Activated T-helper 1 cell treated with anti-CD3 and anti-CD28 coated beads, Interleukin-12 subunit alpha, Interleukin-12 subunit beta, Interleukin-2, Interleukin-4 antibody, amounts not matched to agents 30 ng/mL and 10 ng/mL and 1 ng/mL, durations not matched to agents 14 hours and 24 hours and 36 hours (primary cell): ENCODE measurements at regions of chr19 and their contacts with region 1.

Region 1: DNA sequence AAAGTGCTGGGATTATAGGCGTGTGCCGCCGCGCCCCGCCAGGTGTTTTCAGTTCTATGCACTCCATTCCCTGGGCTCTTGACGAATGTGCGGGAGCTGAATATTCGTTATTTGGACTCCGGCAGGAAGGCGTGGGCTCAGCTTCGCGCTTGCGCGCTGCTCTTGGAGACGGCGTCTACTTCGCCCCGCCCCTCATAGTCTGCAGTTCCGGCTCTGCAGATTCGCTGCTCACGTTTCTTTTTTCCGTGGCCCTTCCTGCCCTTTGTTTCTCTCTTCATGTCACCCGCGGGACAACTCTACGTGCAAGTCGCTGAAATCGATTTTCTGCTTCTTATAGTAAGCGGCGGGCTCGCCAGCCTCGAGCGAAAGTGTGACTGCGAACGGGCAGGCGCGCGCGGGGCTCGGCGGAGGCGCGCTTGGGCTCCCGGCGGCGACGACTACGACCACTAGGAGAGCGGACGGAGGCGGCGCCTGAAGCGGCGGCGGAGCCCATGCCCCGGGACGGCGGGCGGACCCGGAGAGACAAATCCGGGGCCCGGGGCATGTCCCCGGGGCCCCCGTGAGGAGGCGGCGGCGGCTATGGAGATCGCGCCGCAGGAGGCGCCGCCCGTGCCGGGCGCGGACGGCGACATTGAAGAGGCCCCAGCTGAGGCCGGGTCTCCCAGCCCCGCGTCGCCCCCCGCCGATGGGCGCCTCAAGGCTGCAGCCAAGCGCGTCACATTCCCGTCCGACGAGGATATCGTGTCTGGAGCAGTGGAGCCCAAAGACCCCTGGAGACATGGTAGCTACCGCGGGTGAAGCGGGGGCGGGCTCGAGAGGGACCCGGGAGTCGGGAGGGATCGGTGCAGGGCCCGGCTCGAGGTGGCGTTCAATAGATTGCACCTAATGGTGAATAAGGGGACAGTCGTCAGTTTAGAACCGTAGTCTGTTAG is at the start of gene PPP1R37:
- DNase-seq: peak; percentile 92
- H3K4me3 Mint-ChIP-seq: peak within 1 kb of the TSS; percentile 84
- H3K27ac Mint-ChIP-seq: peak within 1 kb of the TSS; percentile 97
- H3K4me1 Mint-ChIP-seq: peaks cover 46% of the 10 kb centered on the region
- H3K27me3 Mint-ChIP-seq: no peaks in the 10 kb centered on the region
- total RNA-seq, gene PPP1R37: 20.4 and 20.5 TPM in 2 replicates

Region 2: DNA sequence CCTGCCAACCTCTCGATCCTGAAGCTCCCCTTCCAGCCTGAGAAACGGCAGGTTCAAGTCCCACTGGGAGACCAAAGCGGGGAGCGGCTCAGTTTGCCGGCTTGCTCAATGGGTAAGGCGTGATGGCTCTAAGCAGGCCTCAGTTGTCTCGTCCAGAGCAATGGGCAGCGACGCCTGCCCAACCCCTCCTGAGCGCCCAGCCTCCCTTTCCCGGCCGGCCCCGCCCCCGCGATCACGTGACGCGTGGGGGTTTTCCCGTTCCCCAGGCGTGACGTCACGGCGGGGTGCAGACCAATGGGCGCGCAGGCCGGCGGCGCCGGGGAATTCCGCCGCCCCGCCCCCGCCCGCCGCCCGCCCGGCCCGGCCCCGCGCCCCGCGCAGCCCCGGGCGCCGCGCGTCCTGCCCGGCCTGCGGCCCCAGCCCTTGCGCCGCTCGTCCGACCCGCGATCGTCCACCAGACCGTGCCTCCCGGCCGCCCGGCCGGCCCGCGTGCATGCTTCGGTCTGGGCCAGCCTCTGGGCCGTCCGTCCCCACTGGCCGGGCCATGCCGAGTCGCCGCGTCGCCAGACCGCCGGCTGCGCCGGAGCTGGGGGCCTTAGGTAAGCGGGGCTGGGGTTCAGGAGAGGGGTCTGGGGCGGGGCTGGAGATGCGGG is 91.8 kb before region 1 on chr19 and contains the start of gene RELB:
- intact Hi-C with region 1: loop called (anchors 1 kb)
- DNase-seq: peak; percentile 96
- H3K4me3 Mint-ChIP-seq: peak within 1 kb of the TSS; percentile 91
- H3K27ac Mint-ChIP-seq: peak within 1 kb of the TSS; percentile 97
- H3K4me1 Mint-ChIP-seq: peaks cover 11% of the 10 kb centered on the region
- H3K27me3 Mint-ChIP-seq: no peaks in the 10 kb centered on the region
- total RNA-seq, gene RELB: 73.3 and 77.5 TPM in 2 replicates

Region 3: GRCh38 chr19:45079063-45079910 is 13.7 kb before region 1 on chr19 and contains the start of gene GEMIN7:
- intact Hi-C with region 1: loop called (anchors 1 kb)
- DNase-seq: peak; percentile 76
- H3K4me3 Mint-ChIP-seq: peak within 1 kb of the TSS; percentile 99
- H3K27ac Mint-ChIP-seq: peak within 1 kb of the TSS; percentile 94
- H3K4me1 Mint-ChIP-seq: peaks cover 40% of the 10 kb centered on the region
- H3K27me3 Mint-ChIP-seq: no peaks in the 10 kb centered on the region
- total RNA-seq, gene GEMIN7: 46.8 and 53.6 TPM in 2 replicates

Region 4: GRCh38 chr19:45125926-45126493 is 33.0 kb after region 1 on chr19:
- intact Hi-C with region 1: loop called (anchors 1 kb)
- DNase-seq: peak; percentile 49
- H3K4me3 Mint-ChIP-seq: no peak overlapping the region
- H3K27ac Mint-ChIP-seq: no peak overlapping the region
- H3K4me1 Mint-ChIP-seq: peaks cover 11% of the 10 kb centered on the region
- H3K27me3 Mint-ChIP-seq: no peaks in the 10 kb centered on the region

Region 5: DNA sequence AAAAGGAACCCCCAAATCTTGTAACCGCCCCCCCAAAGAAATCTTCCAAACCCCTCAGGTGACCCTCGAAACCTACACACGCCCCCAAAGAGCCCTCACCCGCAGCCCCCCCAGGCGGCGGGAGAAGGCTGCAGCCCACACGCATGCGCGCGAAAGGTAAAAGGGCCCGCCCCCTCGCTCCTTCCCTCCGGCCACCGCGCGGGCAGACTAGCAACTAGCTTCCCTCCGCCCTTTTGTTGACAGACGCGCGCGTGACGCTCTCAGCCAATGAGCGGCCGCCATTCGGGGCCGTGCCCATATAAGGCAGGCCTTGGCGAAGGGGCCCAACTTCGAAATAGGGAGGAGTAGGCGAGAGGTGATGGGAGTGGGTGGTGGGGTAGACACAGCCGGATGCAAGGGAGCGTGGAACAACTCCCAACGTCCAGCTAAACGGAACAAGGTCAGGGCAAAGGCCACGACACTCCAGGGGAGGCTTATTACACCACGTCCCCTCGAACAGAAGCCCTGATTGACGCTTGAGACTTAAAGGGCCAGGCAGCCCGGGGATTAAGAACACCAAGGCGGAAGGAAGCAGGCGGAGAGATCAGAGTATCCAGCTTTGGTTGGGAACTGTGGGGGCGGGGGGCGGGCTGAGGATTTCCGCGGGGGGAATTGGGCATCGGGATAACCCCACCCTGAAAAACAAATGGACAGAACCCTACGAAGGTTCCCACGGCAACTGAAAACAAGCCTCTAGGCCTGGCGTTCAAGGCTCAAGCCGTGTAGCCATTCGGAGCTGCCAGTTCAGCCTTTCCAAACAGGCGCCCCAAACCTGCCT is 624.4 kb after region 1 on chr19:
- intact Hi-C with region 1: loop called (anchors 1 kb)
- DNase-seq: peak; percentile 99
- H3K4me3 Mint-ChIP-seq: peak overlapping the region; percentile 96
- H3K27ac Mint-ChIP-seq: peak overlapping the region; percentile 96
- H3K4me1 Mint-ChIP-seq: peaks cover 40% of the 10 kb centered on the region
- H3K27me3 Mint-ChIP-seq: no peaks in the 10 kb centered on the region

Region 6: DNA sequence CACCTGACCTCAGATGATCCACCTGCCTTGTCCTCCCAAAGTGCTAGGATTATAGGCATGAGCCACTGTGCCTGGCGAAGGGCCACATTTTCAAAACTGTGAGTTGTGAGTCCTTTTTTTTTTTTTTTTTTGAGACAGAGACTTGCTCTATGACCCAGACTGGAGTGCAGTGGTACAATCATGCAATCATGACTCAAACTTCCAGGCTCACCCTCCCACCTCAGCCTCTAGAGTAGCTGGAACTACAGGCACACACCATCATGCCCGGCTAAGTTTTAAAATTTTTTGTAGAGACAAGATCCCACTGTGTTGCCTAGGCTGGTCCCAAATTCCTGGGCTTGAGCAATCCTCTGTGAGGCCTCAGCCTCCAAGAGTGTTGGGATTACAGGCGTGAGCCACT is 813.2 kb after region 1 on chr19:
- intact Hi-C with region 1: no loop called
- DNase-seq: no peak
- H3K4me3 Mint-ChIP-seq: no peak overlapping the region
- H3K27ac Mint-ChIP-seq: no peak overlapping the region
- H3K4me1 Mint-ChIP-seq: peaks cover 9% of the 10 kb centered on the region
- H3K27me3 Mint-ChIP-seq: peaks cover 2% of the 10 kb centered on the region